B cell (primary cell): ENCODE measurements at regions of chr2 and their contacts with region 1.

Region 1: DNA sequence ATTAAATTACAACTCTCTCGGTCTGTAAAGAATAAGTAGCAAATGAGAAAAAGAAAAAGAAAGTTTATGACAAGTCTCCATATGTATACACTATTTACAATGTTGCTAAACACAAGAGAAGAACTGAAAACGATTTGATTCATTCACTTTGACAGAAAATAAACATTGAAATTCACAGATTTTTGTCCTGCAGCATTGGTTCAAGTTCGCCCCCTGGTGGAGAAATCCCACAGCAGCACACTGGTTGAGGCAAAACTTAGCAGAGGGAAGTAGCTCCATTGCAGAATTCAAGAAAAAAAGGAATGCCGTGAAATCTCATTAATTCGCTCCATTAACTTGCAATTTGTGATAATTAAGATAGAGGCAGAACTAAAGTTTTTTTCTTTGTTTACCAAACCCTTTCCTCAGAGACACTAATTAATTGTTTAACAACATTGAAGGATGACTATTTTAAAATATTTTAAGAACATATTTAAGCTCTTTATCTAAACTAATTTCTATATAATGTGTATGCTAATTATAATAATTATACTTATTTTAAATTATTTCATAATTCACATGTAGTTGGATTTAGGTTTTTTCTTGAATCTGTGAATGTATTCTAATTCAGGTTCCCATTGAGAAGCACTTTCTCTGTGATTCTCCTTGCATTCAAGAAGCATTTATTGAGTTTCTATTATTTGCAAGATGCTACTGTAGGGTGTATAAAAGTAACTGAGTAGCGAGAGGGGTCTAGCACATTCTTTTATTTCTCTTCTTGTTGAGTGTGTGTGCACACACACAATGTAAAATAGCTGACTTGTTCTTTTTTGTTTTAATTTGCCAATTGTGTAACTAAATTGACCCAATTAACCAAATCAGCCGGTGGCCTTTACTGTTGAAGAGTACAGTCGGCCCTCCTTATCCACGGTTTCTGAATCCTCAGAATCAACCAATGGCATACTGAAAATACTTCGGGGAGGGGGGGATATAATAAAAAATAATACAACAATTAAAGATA is 74.1 kb downstream of the COL4A3 start:
- DNase-seq: peak; percentile 66
- ATAC-seq: peak; percentile 33
- H3K4me3 ChIP-seq: no peak overlapping the region
- H3K4me3 Mint-ChIP-seq: no peak overlapping the region
- H3K27ac ChIP-seq: no peak overlapping the region
- H3K27ac Mint-ChIP-seq: no peak overlapping the region
- H3K4me1 ChIP-seq: no peaks in the 10 kb centered on the region
- H3K4me1 Mint-ChIP-seq: no peaks in the 10 kb centered on the region
- H3K27me3 ChIP-seq: no peaks in the 10 kb centered on the region
- H3K27me3 Mint-ChIP-seq: no peaks in the 10 kb centered on the region
- CTCF ChIP-seq: peak; percentile 97

Region 2: GRCh38 chr2:225668606-225669266 is 1569.8 kb before region 1 on chr2:
- CTCF ChIA-PET with region 1: interaction called, 12 read pairs
- POLR2A ChIA-PET with region 1: no interaction called
- intact Hi-C with region 1: no loop called
- DNase-seq: peak; percentile 67
- ATAC-seq: peak; percentile 60
- H3K4me3 ChIP-seq: no peak overlapping the region
- H3K4me3 Mint-ChIP-seq: no peak overlapping the region
- H3K27ac ChIP-seq: no peak overlapping the region
- H3K27ac Mint-ChIP-seq: no peak overlapping the region
- H3K4me1 ChIP-seq: no peaks in the 10 kb centered on the region
- H3K4me1 Mint-ChIP-seq: no peaks in the 10 kb centered on the region
- H3K27me3 ChIP-seq: no peaks in the 10 kb centered on the region
- H3K27me3 Mint-ChIP-seq: peaks cover 3% of the 10 kb centered on the region
- CTCF ChIP-seq: peak; percentile 84

Region 3: GRCh38 chr2:227125506-227125905 is 113.0 kb before region 1 on chr2:
- CTCF ChIA-PET with region 1: interaction called, 267 read pairs
- POLR2A ChIA-PET with region 1: no interaction called
- intact Hi-C with region 1: loop called (anchors 1 kb)
- DNase-seq: no peak
- ATAC-seq: no peak
- H3K4me3 ChIP-seq: no peak overlapping the region
- H3K4me3 Mint-ChIP-seq: no peak overlapping the region
- H3K27ac ChIP-seq: no peak overlapping the region
- H3K27ac Mint-ChIP-seq: no peak overlapping the region
- H3K4me1 ChIP-seq: no peaks in the 10 kb centered on the region
- H3K4me1 Mint-ChIP-seq: no peaks in the 10 kb centered on the region
- H3K27me3 ChIP-seq: peaks cover 0 to 5% (median 0%) of the 10 kb centered on the region in 4 experiments
- H3K27me3 Mint-ChIP-seq: no peaks in the 10 kb centered on the region
- CTCF ChIP-seq: no peak

Region 4: DNA sequence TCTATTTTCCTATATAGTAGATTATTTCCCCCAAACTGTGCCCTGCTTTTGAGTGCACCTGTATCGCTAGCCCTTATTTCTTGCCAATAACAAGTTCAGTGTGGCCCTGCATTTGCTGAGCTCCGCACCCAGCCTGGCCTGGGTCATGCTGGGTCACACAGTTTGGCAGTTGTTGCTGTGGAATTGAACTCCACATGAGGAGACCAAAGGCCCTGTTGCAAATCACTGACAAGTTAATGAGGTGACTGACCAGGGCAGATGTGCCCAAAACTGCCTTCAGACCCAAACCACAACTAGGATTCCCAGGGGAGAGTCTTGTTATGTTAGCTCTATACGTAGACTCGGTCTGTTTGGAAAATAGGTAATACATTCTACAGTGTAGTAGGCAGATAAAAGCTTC is 105.6 kb before region 1 on chr2:
- CTCF ChIA-PET with region 1: interaction called, 267 read pairs
- POLR2A ChIA-PET with region 1: no interaction called
- intact Hi-C with region 1: loop called (anchors 1 kb)
- DNase-seq: no peak
- ATAC-seq: no peak
- H3K4me3 ChIP-seq: no peak overlapping the region
- H3K4me3 Mint-ChIP-seq: no peak overlapping the region
- H3K27ac ChIP-seq: no peak overlapping the region
- H3K27ac Mint-ChIP-seq: no peak overlapping the region
- H3K4me1 ChIP-seq: no peaks in the 10 kb centered on the region
- H3K4me1 Mint-ChIP-seq: no peaks in the 10 kb centered on the region
- H3K27me3 ChIP-seq: no peaks in the 10 kb centered on the region
- H3K27me3 Mint-ChIP-seq: no peaks in the 10 kb centered on the region
- CTCF ChIP-seq: no peak

Region 5: DNA sequence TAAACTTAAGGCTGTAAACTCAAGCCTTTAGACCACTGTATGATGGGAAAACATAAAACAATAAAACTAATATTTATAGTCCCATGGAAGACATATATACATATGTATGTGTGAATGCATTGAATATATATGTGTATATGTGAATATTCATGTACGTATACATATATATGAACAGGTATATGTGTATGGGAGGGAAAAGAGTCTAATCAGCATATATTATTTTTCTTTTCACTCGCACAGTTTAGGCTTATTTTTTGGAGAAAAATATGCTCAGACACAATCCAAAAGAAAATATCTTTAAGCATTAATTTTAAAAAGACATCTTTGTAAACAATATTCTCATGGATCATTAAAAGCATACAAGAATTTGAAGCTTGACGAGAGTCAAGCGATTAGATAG is 97.2 kb before region 1 on chr2:
- CTCF ChIA-PET with region 1: interaction called, 267 read pairs
- POLR2A ChIA-PET with region 1: no interaction called
- intact Hi-C with region 1: no loop called
- DNase-seq: no peak
- ATAC-seq: no peak
- H3K4me3 ChIP-seq: no peak overlapping the region
- H3K4me3 Mint-ChIP-seq: no peak overlapping the region
- H3K27ac ChIP-seq: no peak overlapping the region
- H3K27ac Mint-ChIP-seq: no peak overlapping the region
- H3K4me1 ChIP-seq: no peaks in the 10 kb centered on the region
- H3K4me1 Mint-ChIP-seq: no peaks in the 10 kb centered on the region
- H3K27me3 ChIP-seq: no peaks in the 10 kb centered on the region
- H3K27me3 Mint-ChIP-seq: no peaks in the 10 kb centered on the region
- CTCF ChIP-seq: no peak

Region 6: GRCh38 chr2:227219312-227220105 is 19.0 kb before region 1 on chr2:
- CTCF ChIA-PET with region 1: interaction called, 18 read pairs
- POLR2A ChIA-PET with region 1: no interaction called
- intact Hi-C with region 1: no loop called
- DNase-seq: no peak
- ATAC-seq: no peak
- H3K4me3 ChIP-seq: no peak overlapping the region
- H3K4me3 Mint-ChIP-seq: no peak overlapping the region
- H3K27ac ChIP-seq: no peak overlapping the region
- H3K27ac Mint-ChIP-seq: no peak overlapping the region
- H3K4me1 ChIP-seq: no peaks in the 10 kb centered on the region
- H3K4me1 Mint-ChIP-seq: no peaks in the 10 kb centered on the region
- H3K27me3 ChIP-seq: no peaks in the 10 kb centered on the region
- H3K27me3 Mint-ChIP-seq: no peaks in the 10 kb centered on the region
- CTCF ChIP-seq: no peak

Region 7: GRCh38 chr2:227248876-227249275 is 10.3 kb after region 1 on chr2:
- CTCF ChIA-PET with region 1: interaction called, 20 read pairs
- POLR2A ChIA-PET with region 1: no interaction called
- intact Hi-C with region 1: no loop called
- DNase-seq: no peak
- ATAC-seq: no peak
- H3K4me3 ChIP-seq: no peak overlapping the region
- H3K4me3 Mint-ChIP-seq: no peak overlapping the region
- H3K27ac ChIP-seq: no peak overlapping the region
- H3K27ac Mint-ChIP-seq: no peak overlapping the region
- H3K4me1 ChIP-seq: no peaks in the 10 kb centered on the region
- H3K4me1 Mint-ChIP-seq: no peaks in the 10 kb centered on the region
- H3K27me3 ChIP-seq: no peaks in the 10 kb centered on the region
- H3K27me3 Mint-ChIP-seq: no peaks in the 10 kb centered on the region
- CTCF ChIP-seq: no peak